ENCODE measurements at regions of chr18 and their contacts with region 1.

Region 1: GRCh38 chr18:46281185-46282176 is 177.3 kb downstream of the HAUS1 start:
- DNase-seq: peak; percentile 63 to 89
- H3K4me3 ChIP-seq: no peak overlapping the region
- H3K27ac ChIP-seq: no peak overlapping the region
- H3K4me1 ChIP-seq: peaks cover 0 to 7% (median 5%) of the 10 kb centered on the region in 4 donors
- H3K27me3 ChIP-seq: no peaks in the 10 kb centered on the region
- CTCF ChIP-seq: peak in 5 of 7 experiments; percentile 57 to 90 (median 82)
- EP300 ChIP-seq: no peak
- POLR2A ChIP-seq: no peak

Region 2: DNA sequence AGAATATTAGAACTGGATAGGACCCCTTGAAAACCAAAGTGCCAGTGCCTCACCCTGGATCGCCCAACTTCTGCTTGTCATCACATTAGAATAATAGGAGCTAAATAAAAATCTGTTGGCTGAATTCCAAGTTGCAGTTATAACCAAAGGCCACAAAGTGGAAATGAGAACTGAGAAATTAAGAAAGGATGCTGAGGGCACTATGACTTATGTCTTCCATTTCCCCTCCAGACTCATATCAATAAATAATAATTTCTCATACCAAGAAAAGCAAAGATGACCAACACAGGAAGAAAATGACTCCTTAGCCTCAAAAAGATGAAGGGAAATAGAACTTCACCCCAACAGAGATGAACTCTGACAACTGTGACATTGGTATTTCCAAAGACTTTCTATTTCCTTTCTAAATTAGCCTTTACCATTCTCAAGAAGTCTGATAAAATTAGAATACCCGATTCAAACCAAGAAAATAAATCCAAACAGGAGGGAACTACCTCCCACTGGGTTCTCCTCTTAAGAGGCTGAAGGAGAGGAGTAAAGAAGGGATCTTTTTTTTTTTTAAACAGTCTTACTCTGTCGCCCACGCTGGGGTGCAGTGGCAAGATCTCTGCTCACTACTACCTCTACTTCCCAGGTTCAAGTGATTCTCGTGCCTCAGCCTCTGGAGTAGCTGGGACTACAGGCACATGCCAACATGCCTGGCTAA is 267.8 kb before region 1 on chr18:
- intact Hi-C with region 1: no loop called
- DNase-seq: no peak
- H3K4me3 ChIP-seq: no peak overlapping the region
- H3K27ac ChIP-seq: no peak overlapping the region
- H3K4me1 ChIP-seq: peaks cover 0 to 15% (median 0%) of the 10 kb centered on the region in 4 donors
- H3K27me3 ChIP-seq: no peaks in the 10 kb centered on the region
- CTCF ChIP-seq: no peak
- EP300 ChIP-seq: no peak
- POLR2A ChIP-seq: no peak

Region 3: GRCh38 chr18:46481048-46481846 is 199.8 kb after region 1 on chr18:
- intact Hi-C with region 1: loop called (anchors 5 kb)
- DNase-seq: peak; percentile 57 to 82
- H3K4me3 ChIP-seq: no peak overlapping the region
- H3K27ac ChIP-seq: no peak overlapping the region
- H3K4me1 ChIP-seq: no peaks in the 10 kb centered on the region
- H3K27me3 ChIP-seq: peaks cover 0 to 30% (median 0%) of the 10 kb centered on the region in 3 donors
- CTCF ChIP-seq: peak in 5 of 7 experiments; percentile 64 to 87 (median 73)
- EP300 ChIP-seq: no peak
- POLR2A ChIP-seq: no peak

Measured in stomach (tissue), 19 donors.